ENCODE measurements at regions of chr5 and their contacts with region 1.

Region 1: GRCh38 chr5:172583931-172584511 is 57.0 kb upstream of the NEURL1B start:
- DNase-seq: peak; percentile 85
- ATAC-seq: peak; percentile 81

Region 2: GRCh38 chr5:172486451-172486850 is 97.6 kb before region 1 on chr5:
- intact Hi-C with region 1: loop called (anchors 5 kb)
- DNase-seq: no peak
- ATAC-seq: no peak

Region 3: DNA sequence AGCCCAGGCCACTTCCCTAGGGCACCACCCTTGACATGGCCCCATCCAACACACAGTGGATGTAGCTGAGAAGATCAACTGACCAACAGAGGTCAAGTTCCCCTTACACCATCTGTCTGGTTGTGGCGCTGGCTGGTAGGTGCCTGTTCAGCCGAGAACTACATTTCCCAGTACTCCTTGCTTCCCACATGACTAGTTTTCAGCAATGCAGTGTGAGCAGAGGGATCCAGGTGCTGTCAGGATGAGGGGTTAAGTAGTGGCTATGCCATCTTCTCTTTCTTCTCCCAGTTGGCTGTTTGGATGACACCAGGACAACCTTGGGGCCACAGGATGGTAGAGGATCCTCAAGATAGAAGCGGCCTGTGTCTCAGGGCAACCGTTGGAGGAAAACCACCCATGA is 81.1 kb before region 1 on chr5:
- intact Hi-C with region 1: loop called (anchors 1 kb)
- DNase-seq: no peak
- ATAC-seq: no peak

Region 4: GRCh38 chr5:172509405-172509781 is 74.6 kb before region 1 on chr5:
- intact Hi-C with region 1: loop called (anchors 1 kb)
- DNase-seq: no peak
- ATAC-seq: no peak

Region 5: GRCh38 chr5:172559004-172559932 is 24.8 kb before region 1 on chr5:
- intact Hi-C with region 1: loop called (anchors 2 kb)
- DNase-seq: peak; percentile 79
- ATAC-seq: peak; percentile 82

Region 6: GRCh38 chr5:172603251-172603806 is 19.3 kb after region 1 on chr5:
- intact Hi-C with region 1: loop called (anchors 1 kb)
- DNase-seq: no peak
- ATAC-seq: no peak

Region 7: GRCh38 chr5:172697123-172698121 is 113.4 kb after region 1 on chr5:
- intact Hi-C with region 1: loop called (anchors 10 kb)
- DNase-seq: peak; percentile 94
- ATAC-seq: peak; percentile 59

Measured in Right ventricle myocardium inferior (tissue), 1 donor.